Mammary epithelial cell (primary cell): ENCODE measurements at regions of chrX and their contacts with region 1.

Region 1: DNA sequence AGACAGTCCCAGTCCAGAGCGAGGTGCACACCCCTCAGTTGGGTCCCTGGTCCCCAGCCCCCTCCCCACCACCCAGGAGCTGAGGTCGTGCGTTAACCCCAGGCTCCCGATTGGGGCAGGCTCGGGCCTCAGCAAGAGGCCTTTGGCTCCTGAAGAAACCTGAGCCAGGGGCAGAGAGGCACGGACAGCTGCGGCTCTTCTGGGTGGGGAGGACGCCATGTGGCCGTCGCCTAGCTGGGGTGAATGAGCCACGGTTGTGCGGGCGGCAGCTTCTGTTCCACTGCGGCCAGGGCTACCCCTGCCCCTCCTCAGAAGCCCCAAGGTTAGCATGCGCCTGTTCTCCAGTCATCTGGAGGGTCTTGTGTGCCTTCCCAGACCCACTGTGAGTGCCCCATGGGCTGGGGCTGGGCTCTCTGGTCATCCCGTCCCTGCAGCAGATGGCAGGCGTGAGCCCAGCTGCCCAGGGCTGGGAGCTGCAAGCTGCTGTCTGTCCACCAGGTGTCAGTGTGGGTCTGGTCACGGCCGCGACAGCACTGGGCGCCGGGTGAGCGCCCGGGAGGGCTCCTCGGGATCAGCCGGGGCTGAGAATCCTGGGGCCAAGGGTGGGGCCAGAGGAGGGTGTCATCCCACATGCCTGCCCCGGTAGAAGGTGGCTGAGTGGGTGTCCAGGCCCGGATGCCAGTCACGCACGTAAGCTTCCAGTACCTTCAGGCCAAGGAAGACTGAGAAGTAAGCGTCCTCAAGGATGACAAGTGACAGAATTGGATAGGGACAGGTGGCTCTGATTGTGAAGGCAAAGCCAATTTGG is 21.9 kb downstream of the ATP2B3 start:
- DNase-seq: peak; percentile 30
- H3K4me3 ChIP-seq: no peak overlapping the region
- H3K27ac ChIP-seq: no peak overlapping the region
- H3K4me1 ChIP-seq: no peaks in the 10 kb centered on the region
- H3K27me3 ChIP-seq: no peaks in the 10 kb centered on the region
- CTCF ChIP-seq: peak; percentile 56 to 89

Region 2: DNA sequence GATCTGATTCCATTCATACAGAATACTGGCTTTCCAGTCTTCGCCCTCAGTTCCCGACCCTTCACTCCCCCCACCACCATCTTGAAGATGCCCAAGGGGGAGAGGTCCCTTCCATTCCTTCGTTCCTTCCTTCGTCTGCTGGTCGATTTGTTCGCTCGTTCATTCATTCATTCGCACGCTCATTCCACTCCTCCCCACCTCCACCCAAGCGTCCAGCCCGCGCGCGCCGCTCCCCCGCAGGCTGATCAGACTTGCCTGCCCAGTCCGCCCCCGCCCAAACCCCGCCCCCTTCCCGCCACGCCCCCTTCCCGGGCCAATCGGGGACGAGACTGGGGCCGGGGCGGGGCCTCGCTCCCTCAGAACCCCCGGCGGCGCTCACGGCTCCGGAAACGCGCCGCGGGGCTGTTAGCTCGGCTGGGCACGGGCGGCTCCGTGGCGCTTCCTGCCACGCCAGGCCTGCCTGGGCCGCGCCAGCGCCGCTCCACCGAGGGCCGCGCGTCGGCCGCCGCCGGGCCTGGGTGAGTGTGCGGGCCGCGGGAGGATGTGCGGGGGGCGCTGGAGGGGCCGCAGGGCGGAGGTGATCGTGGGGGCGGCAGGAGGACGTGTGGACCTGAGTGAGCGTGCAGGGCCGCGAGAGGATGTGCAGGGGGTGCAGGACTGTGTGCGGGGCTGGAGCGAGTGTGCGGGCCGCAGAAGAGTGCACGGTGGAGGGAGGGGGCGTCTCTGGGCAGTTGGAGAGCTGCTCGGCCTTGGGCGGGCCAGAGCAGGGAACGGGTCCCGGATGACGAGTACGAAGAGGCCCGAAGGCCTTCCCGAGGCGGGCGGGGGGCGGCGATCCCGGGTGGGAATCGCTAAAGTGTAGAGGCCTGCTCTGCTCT is 205.4 kb before region 1 on chrX and contains the start of gene ZNF275:
- CTCF ChIA-PET with region 1: no interaction called
- dilution Hi-C with region 1: no loop called
- in situ Hi-C with region 1: no loop called
- intact Hi-C with region 1: no loop called
- DNase-seq: peak; percentile 61
- H3K4me3 ChIP-seq: peak within 1 kb of the TSS; percentile 63 to 77 (median 75)
- H3K27ac ChIP-seq: no peak within 1 kb of the TSS
- H3K4me1 ChIP-seq: peaks cover 5% of the 10 kb centered on the region
- H3K27me3 ChIP-seq: no peaks in the 10 kb centered on the region
- CTCF ChIP-seq: no peak
- total RNA-seq, gene ZNF275: 8.1 to 8.8 TPM

Region 3: DNA sequence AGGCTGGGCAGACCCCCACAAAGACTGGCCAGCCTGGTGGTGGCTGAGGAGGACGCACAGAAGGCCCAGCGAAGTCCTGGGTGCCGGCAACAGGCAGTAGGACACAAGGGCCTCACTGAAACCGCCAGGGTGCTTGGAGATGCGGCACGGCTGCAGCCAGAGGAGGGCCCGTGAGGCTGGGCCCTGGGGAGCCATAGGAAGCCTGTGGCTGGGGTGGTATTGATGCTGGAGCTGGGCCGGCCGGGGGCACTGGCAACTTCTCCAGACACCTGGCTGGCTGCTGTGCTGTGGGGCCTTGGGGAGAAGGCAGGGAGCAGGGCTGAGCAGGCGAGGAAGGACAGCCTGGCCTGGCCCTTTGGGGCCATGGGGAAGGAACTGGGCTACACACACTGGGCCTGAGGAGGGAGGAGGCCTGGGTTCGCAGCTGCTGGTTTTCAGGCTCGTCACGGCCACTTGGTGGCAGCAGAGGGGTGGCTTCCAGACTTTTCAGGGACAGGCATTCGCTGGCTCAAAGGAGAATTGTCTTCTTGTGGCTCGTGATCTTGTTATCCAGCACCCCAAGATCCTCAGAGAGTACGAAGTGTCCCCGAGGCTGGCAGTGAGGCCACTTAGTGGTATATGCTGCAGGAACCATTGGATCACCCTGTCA is 15.3 kb after region 1 on chrX:
- CTCF ChIA-PET with region 1: no interaction called
- dilution Hi-C with region 1: no loop called
- in situ Hi-C with region 1: no loop called
- intact Hi-C with region 1: no loop called
- DNase-seq: peak; percentile 27
- H3K4me3 ChIP-seq: no peak overlapping the region
- H3K27ac ChIP-seq: no peak overlapping the region
- H3K4me1 ChIP-seq: no peaks in the 10 kb centered on the region
- H3K27me3 ChIP-seq: peaks cover 3% of the 10 kb centered on the region
- CTCF ChIP-seq: peak; percentile 48 to 72

Region 4: GRCh38 chrX:153582896-153583295 is 43.5 kb after region 1 on chrX:
- CTCF ChIA-PET with region 1: no interaction called
- dilution Hi-C with region 1: no loop called
- in situ Hi-C with region 1: no loop called
- intact Hi-C with region 1: no loop called
- DNase-seq: peak; percentile 23
- H3K4me3 ChIP-seq: no peak overlapping the region
- H3K27ac ChIP-seq: no peak overlapping the region
- H3K4me1 ChIP-seq: no peaks in the 10 kb centered on the region
- H3K27me3 ChIP-seq: no peaks in the 10 kb centered on the region
- CTCF ChIP-seq: no peak

Region 5: DNA sequence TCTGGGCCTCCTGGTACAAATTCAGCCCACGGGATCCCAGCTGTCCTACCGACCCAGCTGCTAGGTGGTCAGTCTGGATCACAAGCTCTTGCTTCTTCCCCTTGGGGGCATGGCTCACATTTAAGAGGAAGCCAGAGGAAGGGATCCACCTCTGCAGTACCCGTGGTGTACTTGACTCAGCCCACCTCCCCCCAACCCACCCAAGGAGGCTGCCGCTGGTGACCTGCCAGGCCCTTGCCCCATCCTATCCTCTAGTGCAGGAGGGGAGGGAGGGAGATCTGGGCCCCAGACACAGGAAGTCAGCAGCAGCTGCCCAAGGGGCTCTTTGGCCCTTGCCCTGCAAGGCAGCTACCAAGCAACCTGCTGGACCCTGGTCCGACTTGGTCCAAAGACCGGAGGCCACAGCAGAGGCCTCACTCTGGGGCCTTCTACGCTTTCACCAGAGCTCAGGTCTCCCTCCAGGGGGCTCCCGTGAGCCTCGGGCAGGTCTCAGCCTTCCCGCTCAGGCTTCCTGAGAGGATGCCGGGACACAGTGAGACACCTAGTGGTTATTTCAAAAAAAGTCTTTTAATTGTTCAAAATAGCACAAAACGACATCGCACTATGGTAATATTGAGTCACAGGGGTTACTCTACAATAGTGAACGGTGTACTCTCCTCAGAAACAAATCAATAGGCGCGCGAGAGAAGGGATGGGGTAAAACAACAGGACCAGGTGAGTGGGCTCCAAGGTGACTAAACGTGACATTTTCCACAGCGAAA is 407.8 kb after region 1 on chrX:
- CTCF ChIA-PET with region 1: no interaction called
- dilution Hi-C with region 1: no loop called
- in situ Hi-C with region 1: no loop called
- intact Hi-C with region 1: loop called (anchors 5 kb)
- DNase-seq: peak; percentile 61
- H3K4me3 ChIP-seq: no peak overlapping the region
- H3K27ac ChIP-seq: no peak overlapping the region
- H3K4me1 ChIP-seq: no peaks in the 10 kb centered on the region
- H3K27me3 ChIP-seq: no peaks in the 10 kb centered on the region
- CTCF ChIP-seq: peak; percentile 71 to 85